ENCODE measurements at regions of chr2 and their contacts with region 1.

Region 1: GRCh38 chr2:88880441-88880953 is 189.0 kb downstream of the RPIA start:
- DNase-seq: no peak
- ATAC-seq: peak; percentile 75
- H3K4me3 Mint-ChIP-seq: peak overlapping the region; percentile 74
- H3K27ac Mint-ChIP-seq: peak overlapping the region; percentile 84
- H3K4me1 Mint-ChIP-seq: peaks cover 70% of the 10 kb centered on the region
- H3K27me3 Mint-ChIP-seq: no peaks in the 10 kb centered on the region
- CTCF ChIP-seq: no peak

Region 2: DNA sequence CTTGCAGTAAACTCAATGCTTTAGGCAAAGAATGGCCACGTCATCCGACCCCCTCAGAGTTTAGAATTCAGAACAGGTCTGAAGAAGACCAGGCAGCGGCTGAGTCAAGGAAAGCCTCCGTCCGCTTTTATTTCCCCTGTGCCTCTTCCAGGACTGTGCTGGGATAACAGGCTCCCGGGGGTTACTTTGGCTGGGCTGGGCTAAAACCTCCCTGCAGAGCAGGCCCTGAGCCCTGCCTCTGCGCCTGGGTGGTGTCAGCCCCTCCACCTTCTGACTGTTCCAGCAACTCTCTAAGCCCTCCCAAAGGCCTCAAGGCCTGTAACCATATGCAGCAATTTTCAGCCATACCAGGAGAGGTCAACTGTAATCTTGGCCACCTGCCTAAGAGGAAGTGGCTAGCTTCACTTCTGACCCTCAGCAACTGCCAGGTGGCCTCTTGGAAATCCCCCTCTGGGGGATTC is 22.5 kb before region 1 on chr2:
- CTCF ChIA-PET with region 1: interaction called, 8 read pairs
- POLR2A ChIA-PET with region 1: interaction called, 79 read pairs
- intact Hi-C with region 1: loop called (anchors 1 kb)
- DNase-seq: peak; percentile 39
- ATAC-seq: peak; percentile 43
- H3K4me3 Mint-ChIP-seq: peak overlapping the region; percentile 97
- H3K27ac Mint-ChIP-seq: peak overlapping the region; percentile 98
- H3K4me1 Mint-ChIP-seq: peaks cover 54% of the 10 kb centered on the region
- H3K27me3 Mint-ChIP-seq: no peaks in the 10 kb centered on the region
- CTCF ChIP-seq: no peak

Region 3: DNA sequence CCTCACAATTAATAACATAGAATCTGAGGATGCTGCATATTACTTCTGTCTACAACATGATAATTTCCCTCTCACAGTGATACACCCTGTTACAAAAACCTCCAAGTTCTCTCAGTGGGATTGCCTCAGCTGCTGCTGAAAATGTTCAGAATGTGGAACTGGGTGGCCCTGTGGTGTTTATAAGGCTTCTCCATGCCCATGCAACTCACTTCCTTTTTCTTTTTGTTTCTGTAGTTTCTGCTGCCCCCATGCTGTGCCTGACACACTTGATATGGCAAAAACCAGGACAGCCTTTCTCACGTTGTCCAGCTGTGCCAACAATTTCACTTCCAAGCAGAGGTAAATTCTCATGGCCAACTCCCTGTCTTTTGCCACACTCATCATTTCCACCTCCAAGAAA is 17.2 kb after region 1 on chr2:
- CTCF ChIA-PET with region 1: interaction called, 29 read pairs
- POLR2A ChIA-PET with region 1: interaction called, 17 read pairs
- intact Hi-C with region 1: loop called (anchors 1 kb)
- DNase-seq: no peak
- ATAC-seq: peak; percentile 71
- H3K4me3 Mint-ChIP-seq: peak overlapping the region; percentile 32
- H3K27ac Mint-ChIP-seq: peak overlapping the region; percentile 63
- H3K4me1 Mint-ChIP-seq: peaks cover 18% of the 10 kb centered on the region
- H3K27me3 Mint-ChIP-seq: no peaks in the 10 kb centered on the region
- CTCF ChIP-seq: no peak

Region 4: DNA sequence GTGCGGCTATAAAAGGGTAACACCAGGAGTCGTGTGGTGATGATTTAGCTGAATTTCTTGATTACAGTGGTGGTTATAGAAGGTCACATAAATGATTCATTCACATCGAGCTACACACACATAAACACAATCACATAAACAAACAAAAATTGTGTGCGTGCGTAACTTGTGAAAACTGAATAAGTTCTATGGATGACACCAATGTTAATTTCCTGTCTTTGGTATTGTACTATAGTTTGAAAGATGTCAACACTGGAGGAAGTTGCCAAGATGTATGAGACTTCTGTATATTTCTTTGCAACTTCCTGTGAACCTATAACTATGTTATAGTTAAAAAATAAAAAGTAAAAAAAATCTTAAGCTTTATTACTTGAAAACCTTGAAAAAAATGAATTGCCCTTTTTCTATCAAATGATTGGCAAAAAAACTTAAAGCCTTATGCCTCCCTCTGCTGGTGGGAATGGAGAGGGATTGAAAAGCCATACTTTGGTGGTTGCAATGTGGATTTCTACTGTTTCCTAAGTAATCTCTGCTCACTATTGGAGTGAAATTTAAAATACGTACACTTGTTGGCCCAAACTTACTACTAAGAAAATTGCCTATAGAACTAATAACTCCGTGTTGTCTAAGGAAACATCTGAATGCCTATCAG is 38.7 kb after region 1 on chr2:
- CTCF ChIA-PET with region 1: interaction called, 22 read pairs
- POLR2A ChIA-PET with region 1: no interaction called
- intact Hi-C with region 1: loop called (anchors 1 kb)
- DNase-seq: no peak
- ATAC-seq: no peak
- H3K4me3 Mint-ChIP-seq: no peak overlapping the region
- H3K27ac Mint-ChIP-seq: no peak overlapping the region
- H3K4me1 Mint-ChIP-seq: peaks cover 8% of the 10 kb centered on the region
- H3K27me3 Mint-ChIP-seq: no peaks in the 10 kb centered on the region
- CTCF ChIP-seq: no peak

Region 5: DNA sequence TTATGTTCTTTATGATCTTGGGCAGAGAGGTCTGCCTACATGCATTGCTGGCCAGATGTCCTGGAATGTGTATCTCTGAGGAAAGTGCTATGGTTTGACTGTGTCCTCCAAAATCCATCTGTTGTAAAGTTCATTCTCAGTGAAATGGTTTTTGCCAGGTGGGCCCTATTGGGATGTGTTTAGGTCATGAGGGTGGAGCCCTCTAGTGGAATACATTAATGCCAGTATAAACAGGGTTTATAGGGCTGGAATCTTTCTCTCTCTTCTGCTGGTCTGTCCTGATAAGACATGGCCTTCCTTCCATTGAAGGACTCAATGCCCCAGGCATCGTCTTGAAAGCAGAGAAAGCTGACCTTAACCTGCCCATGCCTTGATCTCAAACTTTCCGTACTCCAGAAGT is 69.5 kb after region 1 on chr2:
- CTCF ChIA-PET with region 1: interaction called, 4 read pairs
- POLR2A ChIA-PET with region 1: no interaction called
- intact Hi-C with region 1: loop called (anchors 2 kb)
- DNase-seq: no peak
- ATAC-seq: no peak
- H3K4me3 Mint-ChIP-seq: no peak overlapping the region
- H3K27ac Mint-ChIP-seq: no peak overlapping the region
- H3K4me1 Mint-ChIP-seq: peaks cover 6% of the 10 kb centered on the region
- H3K27me3 Mint-ChIP-seq: peaks cover 2% of the 10 kb centered on the region
- CTCF ChIP-seq: no peak